Ascending aorta (tissue), 2 donors: ENCODE measurements at regions of chr14 and their contacts with region 1.

Region 1: DNA sequence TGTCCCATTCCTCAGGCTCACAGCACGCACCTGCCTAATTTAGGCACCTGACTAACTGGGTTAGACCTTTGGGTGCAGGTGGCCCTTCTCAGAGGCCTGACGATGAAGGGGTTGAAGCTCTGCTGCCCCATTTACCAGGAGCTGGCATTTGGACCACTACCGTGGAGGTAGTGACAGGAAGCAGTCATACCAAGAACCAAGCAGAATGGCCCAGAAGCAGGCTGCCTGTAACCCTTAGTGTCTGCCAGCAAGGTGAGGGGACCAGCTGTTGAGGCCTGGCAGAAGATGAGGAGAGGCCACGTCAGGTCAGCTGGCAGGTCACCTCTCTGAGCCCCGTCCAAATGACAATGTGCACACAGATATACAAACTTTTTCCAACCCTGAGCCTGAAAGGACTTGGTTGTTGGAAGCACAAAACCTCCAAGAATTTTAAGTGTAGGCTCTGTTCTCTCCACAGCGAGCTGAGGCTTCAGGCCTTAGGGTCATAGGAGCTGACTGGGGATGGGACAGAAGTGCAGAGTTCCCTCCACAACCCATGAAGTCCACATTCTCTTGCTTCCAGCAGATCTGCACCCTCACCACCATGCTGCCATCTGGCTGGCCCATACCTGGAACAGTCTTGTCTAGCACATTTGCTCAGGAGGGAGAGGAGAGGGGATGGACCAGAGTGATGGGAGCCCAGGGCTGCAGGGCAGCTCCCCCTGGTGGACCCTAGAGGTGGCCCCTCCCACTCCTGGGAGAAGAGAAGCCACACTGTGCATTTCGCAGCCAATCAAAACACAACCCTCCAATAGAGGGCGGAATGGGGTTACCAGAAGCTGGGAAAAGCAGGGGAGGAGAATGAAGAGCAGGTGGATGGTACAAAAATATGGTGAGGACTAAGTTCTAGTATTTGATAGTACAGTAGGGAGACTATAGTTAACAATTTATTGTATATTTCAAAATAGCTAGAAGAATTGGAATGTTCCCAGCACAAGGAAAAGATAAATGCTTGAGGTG is 23.3 kb downstream of the VASH1 start:
- DNase-seq: peak in 1 of 2 donors; percentile 92
- H3K4me3 ChIP-seq: no peak overlapping the region
- H3K27ac ChIP-seq: peak overlapping the region; percentile 40 to 59
- H3K4me1 ChIP-seq: peaks cover 0 to 10% of the 10 kb centered on the region in 2 donors
- H3K27me3 ChIP-seq: no peaks in the 10 kb centered on the region
- CTCF ChIP-seq: peak; percentile 83 to 92 (median 89)

Region 2: DNA sequence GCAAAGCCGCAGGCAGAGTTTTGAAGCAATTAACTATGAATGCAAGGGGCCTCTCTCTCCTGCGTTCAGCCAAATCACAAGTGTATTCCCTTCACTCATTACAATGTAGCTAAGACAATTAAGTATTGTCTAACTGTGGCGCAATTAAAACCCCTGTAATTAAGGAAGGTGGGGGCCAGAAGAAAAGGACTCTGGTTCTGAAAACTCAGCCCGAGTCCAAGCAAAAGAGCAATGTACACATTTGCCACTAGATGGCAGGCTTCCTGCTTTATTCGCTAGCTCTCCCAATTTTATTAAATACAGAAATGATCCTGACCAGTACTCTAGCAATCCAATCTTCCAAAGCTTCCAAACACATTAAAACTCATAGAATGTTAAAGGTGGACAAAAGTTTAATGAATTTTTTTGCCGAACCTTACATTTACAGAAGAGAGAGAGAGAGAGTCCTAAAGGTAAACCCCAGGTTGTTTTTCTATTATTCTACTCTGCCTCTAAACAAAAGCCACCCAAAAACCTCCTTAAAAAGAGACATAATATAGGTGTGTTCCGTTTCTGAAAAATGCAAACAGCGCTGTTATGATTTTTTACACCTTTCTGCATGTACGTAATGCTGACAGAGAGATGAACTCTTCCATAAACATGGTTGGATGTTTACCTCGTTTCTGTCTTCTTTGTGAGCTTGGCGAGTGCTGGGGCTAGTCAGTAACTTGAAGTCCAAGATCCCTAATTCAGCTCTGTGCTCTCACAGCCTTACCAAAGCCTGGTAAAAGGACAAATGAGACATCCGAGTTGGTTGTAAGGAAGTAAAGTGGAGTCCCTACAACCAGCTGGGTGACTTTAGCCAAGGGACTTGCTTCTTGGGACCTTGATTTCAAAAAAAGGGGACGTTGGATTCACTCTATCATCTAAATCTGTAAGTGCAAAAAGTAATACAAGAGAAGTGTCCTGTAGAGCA is 74.2 kb before region 1 on chr14:
- intact Hi-C with region 1: loop called (anchors 1 kb)
- DNase-seq: peak in 1 of 2 donors; percentile 57
- H3K4me3 ChIP-seq: no peak overlapping the region
- H3K27ac ChIP-seq: no peak overlapping the region
- H3K4me1 ChIP-seq: no peaks in the 10 kb centered on the region
- H3K27me3 ChIP-seq: no peaks in the 10 kb centered on the region
- CTCF ChIP-seq: peak; percentile 62 to 70 (median 66)

Region 3: DNA sequence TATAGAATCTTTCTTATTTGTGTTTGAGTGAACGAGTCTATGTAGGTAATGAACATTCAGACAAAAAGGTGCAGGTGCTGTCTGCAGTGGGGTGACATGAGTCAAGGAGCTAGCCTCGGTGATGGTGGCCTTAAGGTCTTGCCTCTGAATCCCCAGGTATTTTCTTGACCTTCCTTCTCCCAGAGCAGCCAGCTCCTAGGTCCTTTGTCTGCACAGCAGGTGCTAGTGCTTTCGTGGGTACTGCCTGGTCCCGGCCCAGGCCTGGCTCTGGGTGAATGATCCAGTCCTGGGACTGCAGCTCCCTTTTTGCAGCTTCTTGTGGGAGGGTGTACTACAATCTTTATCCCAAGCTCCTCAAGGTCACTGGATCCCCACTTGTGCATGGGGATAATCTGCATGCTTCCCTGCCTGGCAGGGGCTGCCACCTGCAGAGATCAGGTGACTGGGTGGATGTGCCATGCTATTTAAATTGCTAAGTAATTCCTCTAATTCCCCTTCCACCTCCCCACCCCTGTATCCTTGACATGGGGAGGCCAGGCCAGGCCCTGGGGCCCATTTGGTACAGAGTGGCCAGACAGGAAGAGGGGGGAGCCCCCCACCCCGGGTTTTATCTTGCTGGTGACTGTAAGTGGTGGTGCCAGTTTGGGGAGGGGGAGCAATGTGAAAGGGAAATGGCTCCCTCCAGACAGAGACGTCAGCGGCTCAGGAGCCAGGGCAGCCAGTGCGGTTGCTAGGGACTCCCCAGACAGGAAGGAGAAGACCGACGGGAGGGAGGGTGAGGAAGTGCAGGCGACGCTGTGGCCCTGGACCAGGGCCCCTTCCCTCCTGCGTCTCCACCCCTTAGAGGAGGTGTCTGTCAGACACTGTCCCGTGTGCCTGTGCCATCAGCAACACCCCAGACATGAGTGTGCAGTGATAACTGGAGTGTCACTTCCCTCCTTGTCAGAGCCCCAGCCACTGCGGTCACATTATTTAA is 16.6 kb before region 1 on chr14:
- intact Hi-C with region 1: no loop called
- DNase-seq: peak; percentile 55 to 82
- H3K4me3 ChIP-seq: no peak overlapping the region
- H3K27ac ChIP-seq: peak overlapping the region; percentile 46 to 79
- H3K4me1 ChIP-seq: peaks cover 17 to 41% of the 10 kb centered on the region in 2 donors
- H3K27me3 ChIP-seq: no peaks in the 10 kb centered on the region
- CTCF ChIP-seq: no peak

Region 4: GRCh38 chr14:76806446-76806845 is 21.9 kb after region 1 on chr14:
- intact Hi-C with region 1: no loop called
- DNase-seq: no peak
- H3K4me3 ChIP-seq: no peak overlapping the region
- H3K27ac ChIP-seq: no peak overlapping the region
- H3K4me1 ChIP-seq: no peaks in the 10 kb centered on the region
- H3K27me3 ChIP-seq: no peaks in the 10 kb centered on the region
- CTCF ChIP-seq: no peak